Esophagus squamous epithelium (tissue), 5 donors: ENCODE measurements at regions of chr1 and their contacts with region 1.

Region 1: DNA sequence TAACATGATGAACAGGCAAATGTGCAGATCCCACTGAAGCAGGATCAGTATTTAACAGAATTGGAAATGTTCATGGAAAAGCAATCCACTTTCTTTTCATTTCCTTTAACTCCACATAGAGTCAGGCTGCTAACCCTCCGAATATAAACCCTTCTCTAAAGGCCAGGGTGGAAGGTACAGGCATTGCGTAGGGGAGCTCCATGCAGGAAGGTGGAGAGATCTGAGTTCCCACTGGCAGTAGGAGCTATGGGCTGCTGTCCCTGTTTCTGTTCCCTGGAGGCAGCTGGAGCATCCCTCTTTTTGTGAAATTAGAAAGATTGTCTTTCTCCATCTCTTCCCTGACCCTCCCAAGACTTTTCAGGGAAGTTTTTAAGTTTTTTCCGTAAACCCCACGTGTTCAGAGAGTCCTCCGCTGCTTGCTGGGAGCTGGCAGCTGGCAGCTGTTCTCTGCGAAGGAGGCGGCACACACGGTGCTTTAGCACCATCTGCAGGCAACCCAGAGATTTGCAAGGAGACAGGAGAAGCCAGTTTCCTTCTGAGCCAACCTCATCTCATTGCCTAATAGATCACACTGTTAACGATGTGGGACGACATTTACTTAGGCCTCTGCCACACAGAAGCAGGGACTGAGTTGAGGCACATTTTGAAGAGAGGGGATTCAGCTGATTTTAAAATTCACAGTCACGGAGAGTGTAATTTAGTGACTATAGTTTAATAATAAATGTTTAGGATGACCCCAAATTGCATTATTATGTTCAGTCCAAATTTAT is 55.4 kb upstream of the HOOK1 start:
- DNase-seq: peak; percentile 12
- H3K4me3 ChIP-seq: peak overlapping the region in 1 of 4 donors; percentile 46
- H3K27ac ChIP-seq: peak overlapping the region; percentile 11 to 67 (median 44)
- H3K4me1 ChIP-seq: peaks cover 0 to 52% (median 7%) of the 10 kb centered on the region in 3 donors
- H3K27me3 ChIP-seq: no peaks in the 10 kb centered on the region
- CTCF ChIP-seq: peak; percentile 82 to 98 (median 94)
- POLR2A ChIP-seq: no peak

Region 2: DNA sequence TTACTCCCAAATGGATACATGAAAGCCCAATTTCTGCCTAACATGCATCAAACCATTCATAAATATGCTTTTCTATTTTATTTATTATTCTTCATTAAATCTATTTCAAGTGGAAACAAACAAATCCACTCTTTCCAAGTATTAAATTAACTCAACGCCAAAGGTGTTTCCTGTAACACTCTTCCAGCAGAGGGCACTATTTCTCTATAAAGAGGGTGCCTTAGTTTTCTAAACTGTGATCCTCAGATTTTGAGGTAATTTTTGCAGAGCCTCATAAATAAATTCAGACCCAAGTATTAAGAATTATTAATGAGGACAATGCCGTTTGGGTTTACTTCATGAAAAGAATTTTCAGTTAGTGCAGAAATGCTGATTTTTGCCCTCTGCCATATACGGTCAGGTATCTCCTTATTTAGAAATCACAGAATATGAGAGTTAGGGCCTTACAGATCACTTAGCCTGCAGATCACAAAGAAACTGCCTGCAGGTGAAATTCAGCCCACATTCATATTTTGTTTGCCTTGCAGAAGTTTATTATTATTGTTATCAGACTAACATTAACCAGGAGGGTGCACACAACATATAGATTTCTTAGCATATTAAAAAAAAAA is 1019.4 kb before region 1 on chr1:
- intact Hi-C with region 1: loop called (anchors 10 kb)
- DNase-seq: no peak
- H3K4me3 ChIP-seq: no peak overlapping the region
- H3K27ac ChIP-seq: no peak overlapping the region
- H3K4me1 ChIP-seq: peaks cover 0 to 21% (median 2%) of the 10 kb centered on the region in 3 donors
- H3K27me3 ChIP-seq: no peaks in the 10 kb centered on the region
- CTCF ChIP-seq: peak; percentile 77 to 92 (median 86)
- POLR2A ChIP-seq: no peak